Motor neuron (in vitro differentiated cells): ENCODE measurements at regions of chr9 and their contacts with region 1.

Region 1: DNA sequence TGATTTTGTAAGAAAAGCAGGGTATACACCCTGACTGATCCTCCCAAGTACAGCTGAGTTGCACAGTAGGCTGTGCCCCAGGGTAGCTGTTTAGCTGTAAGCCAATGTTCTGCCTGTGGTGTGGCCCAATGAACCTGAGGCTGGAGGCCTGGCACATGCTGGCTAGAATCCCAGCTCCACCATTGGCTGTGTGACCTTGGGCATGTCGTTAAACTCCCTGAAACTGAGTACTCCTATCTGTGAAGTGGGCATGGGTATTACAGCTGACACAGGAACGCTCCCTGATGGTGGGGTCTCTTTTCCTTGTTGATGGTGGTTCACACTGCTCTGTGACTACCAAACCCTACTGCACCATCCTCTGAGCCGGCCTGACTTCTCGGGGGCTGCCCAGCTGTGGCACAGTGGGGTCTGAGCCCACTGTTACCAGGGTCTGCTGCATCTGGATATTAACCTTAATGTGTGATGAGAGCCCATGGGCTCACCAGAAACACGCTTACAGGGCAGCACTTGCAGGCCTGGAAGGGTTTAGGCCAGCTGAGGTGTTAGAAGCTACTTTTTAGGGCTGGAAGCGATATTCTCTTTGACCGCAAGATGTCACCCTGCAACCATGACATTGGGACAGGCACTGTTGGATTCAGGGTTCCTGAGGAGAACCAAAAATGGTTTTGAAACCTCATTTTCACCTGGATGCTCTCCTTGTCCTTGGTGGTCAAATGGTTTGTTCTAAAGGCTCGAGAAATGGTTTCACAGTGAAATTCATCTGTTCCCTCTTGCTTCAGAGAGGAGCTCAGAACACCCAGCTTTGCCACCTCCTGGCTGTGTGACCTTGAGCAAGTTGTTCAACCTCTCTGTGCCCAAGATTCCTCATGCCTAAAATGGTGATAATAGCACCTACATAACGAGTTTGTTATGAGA is 6.8 kb upstream of the GADD45G start:
- ATAC-seq: peak; percentile 30 to 68 (median 48)
- H3K4me3 ChIP-seq: no peak overlapping the region
- H3K27ac ChIP-seq: no peak overlapping the region
- H3K4me1 ChIP-seq: peaks cover 0 to 4% of the 10 kb centered on the region in 2 donors

Region 2: GRCh38 chr9:89328064-89328463 is 269.9 kb before region 1 on chr9:
- in situ Hi-C with region 1: no loop called
- ATAC-seq: no peak
- H3K4me3 ChIP-seq: no peak overlapping the region
- H3K27ac ChIP-seq: no peak overlapping the region
- H3K4me1 ChIP-seq: no peaks in the 10 kb centered on the region

Region 3: DNA sequence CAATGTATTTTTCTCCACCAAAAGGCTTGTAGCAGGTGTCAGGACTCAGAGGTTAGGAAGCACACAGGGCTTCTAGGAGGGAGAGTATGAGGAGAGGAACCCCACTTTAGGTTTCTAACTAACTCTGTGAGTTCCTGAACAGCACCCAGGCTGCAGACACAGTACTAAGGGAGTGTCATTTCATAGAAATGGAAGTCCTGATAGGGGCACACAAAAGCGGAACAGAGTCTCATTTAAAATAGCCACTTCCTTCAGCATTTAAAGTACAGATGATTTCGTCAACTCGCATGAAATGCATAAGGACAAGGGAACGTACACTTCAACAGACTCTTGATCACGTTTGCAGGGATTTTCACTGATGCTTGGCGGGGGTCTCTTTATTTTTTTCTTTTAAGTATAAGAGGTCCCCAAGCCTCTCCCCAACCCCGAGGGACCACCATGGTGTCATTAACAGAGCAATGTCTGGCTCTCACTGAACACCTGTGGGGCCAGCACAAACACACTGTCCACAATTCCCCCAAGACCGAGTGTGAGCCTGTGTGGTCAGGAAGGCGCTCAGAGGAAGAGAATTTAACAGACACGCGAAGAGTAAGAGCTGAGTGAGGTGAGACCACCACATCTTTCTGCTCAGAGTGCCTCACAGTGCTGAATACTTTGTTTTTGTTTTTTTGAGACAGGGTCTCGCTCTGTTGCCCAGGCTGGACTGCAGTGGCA is 197.4 kb before region 1 on chr9:
- in situ Hi-C with region 1: no loop called
- ATAC-seq: no peak
- H3K4me3 ChIP-seq: no peak overlapping the region
- H3K27ac ChIP-seq: no peak overlapping the region
- H3K4me1 ChIP-seq: no peaks in the 10 kb centered on the region

Region 4: GRCh38 chr9:90102292-90102901 is 504.4 kb after region 1 on chr9:
- in situ Hi-C with region 1: loop called (anchors 5 to 10 kb)
- ATAC-seq: peak; percentile 71 to 100 (median 87)
- H3K4me3 ChIP-seq: no peak overlapping the region
- H3K27ac ChIP-seq: no peak overlapping the region
- H3K4me1 ChIP-seq: peaks cover 9 to 17% of the 10 kb centered on the region in 2 donors

Region 5: GRCh38 chr9:90773617-90774016 is 1175.6 kb after region 1 on chr9:
- in situ Hi-C with region 1: loop called in 1 of 9 experiments (anchors 25 kb)
- ATAC-seq: peak; percentile 69 to 94 (median 78)
- H3K4me3 ChIP-seq: no peak overlapping the region
- H3K27ac ChIP-seq: no peak overlapping the region
- H3K4me1 ChIP-seq: peaks cover 2 to 10% of the 10 kb centered on the region in 2 donors